GM12878 (cell line): ENCODE measurements at regions of chr21 and their contacts with region 1.

Region 1: DNA sequence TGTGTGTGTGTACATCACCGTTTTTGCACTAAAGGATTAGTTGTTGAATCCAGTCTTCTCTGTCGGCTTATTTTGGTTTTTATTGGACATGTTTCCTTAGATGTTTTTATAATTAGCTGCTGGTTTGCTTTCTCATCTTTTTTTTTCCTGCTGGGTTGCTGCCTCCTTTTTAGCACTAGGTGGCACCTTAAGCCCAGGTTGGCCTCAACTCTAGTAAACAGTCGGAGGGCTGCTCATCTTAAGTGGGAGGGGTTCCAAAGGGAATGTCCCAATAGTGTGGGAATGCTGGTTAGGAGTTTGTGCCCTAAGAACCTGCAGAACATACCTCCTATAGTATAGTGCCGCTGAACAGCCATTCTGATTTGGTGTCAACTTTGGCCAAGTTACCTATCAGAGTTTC is 570.1 kb upstream of the CXADR start:
- DNase-seq: no peak
- ATAC-seq: no peak
- H3K4me3 ChIP-seq: no peak overlapping the region
- H3K27ac ChIP-seq: no peak overlapping the region
- H3K4me1 ChIP-seq: no peaks in the 10 kb centered on the region
- H3K27me3 ChIP-seq: no peaks in the 10 kb centered on the region
- CTCF ChIP-seq: no peak
- EP300 ChIP-seq: no peak
- POLR2A ChIP-seq: no peak
- RAD21 ChIP-seq: 0 out of 2 replicates have a peak, but pooled peaks have one; percentile 3

Region 2: DNA sequence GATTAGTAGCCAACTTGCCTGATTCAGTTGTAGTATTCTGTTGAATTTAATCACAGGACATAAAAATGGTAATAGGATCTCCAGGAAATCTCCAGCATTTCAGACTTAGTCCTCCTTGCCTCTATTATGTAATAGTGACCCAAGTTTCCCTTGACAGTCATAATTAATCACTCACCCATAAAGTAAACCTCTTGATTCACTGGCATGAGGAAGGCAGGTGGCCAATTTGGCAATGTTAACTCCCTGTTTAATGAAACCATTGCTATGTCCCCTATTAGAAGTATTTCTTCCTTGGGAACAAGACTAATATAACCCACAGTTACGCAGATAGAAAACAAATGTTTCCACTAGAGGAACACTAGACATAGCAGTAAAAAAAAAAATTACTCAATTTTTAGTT is 34.6 kb before region 1 on chr21:
- CTCF ChIA-PET with region 1: no interaction called
- POLR2A ChIA-PET with region 1: no interaction called
- RAD21 ChIA-PET with region 1: no interaction called
- SMC1A ChIA-PET with region 1: no interaction called
- in situ Hi-C with region 1: no loop called
- intact Hi-C with region 1: loop called (anchors 2 kb)
- DNase-seq: no peak
- ATAC-seq: no peak
- H3K4me3 ChIP-seq: no peak overlapping the region
- H3K27ac ChIP-seq: no peak overlapping the region
- H3K4me1 ChIP-seq: no peaks in the 10 kb centered on the region
- H3K27me3 ChIP-seq: no peaks in the 10 kb centered on the region
- CTCF ChIP-seq: no peak
- EP300 ChIP-seq: no peak
- POLR2A ChIP-seq: no peak
- RAD21 ChIP-seq: no peak

Region 3: GRCh38 chr21:16992448-16992847 is 49.7 kb after region 1 on chr21:
- CTCF ChIA-PET with region 1: no interaction called
- POLR2A ChIA-PET with region 1: no interaction called
- RAD21 ChIA-PET with region 1: no interaction called
- SMC1A ChIA-PET with region 1: no interaction called
- in situ Hi-C with region 1: no loop called
- intact Hi-C with region 1: no loop called
- DNase-seq: no peak
- ATAC-seq: no peak
- H3K4me3 ChIP-seq: no peak overlapping the region
- H3K27ac ChIP-seq: no peak overlapping the region
- H3K4me1 ChIP-seq: no peaks in the 10 kb centered on the region
- H3K27me3 ChIP-seq: no peaks in the 10 kb centered on the region
- CTCF ChIP-seq: no peak
- EP300 ChIP-seq: no peak
- POLR2A ChIP-seq: no peak
- RAD21 ChIP-seq: no peak

Region 4: GRCh38 chr21:17128132-17128719 is 185.5 kb after region 1 on chr21:
- CTCF ChIA-PET with region 1: no interaction called
- POLR2A ChIA-PET with region 1: no interaction called
- RAD21 ChIA-PET with region 1: no interaction called
- SMC1A ChIA-PET with region 1: no interaction called
- in situ Hi-C with region 1: no loop called
- intact Hi-C with region 1: no loop called
- DNase-seq: no peak
- ATAC-seq: no peak
- H3K4me3 ChIP-seq: no peak overlapping the region
- H3K27ac ChIP-seq: no peak overlapping the region
- H3K4me1 ChIP-seq: no peaks in the 10 kb centered on the region
- H3K27me3 ChIP-seq: no peaks in the 10 kb centered on the region
- CTCF ChIP-seq: no peak
- EP300 ChIP-seq: no peak
- POLR2A ChIP-seq: no peak
- RAD21 ChIP-seq: no peak

Region 5: GRCh38 chr21:17402937-17403336 is 460.2 kb after region 1 on chr21:
- CTCF ChIA-PET with region 1: no interaction called
- POLR2A ChIA-PET with region 1: no interaction called
- RAD21 ChIA-PET with region 1: no interaction called
- SMC1A ChIA-PET with region 1: no interaction called
- in situ Hi-C with region 1: no loop called
- intact Hi-C with region 1: no loop called
- DNase-seq: no peak
- ATAC-seq: no peak
- H3K4me3 ChIP-seq: no peak overlapping the region
- H3K27ac ChIP-seq: no peak overlapping the region
- H3K4me1 ChIP-seq: no peaks in the 10 kb centered on the region
- H3K27me3 ChIP-seq: no peaks in the 10 kb centered on the region
- CTCF ChIP-seq: no peak
- EP300 ChIP-seq: no peak
- POLR2A ChIP-seq: no peak
- RAD21 ChIP-seq: no peak